Activated B cell treated with CpG ODN at 0.5 μM for 24 hours (primary cell): ENCODE measurements at regions of chr2 and their contacts with region 1.

Region 1: DNA sequence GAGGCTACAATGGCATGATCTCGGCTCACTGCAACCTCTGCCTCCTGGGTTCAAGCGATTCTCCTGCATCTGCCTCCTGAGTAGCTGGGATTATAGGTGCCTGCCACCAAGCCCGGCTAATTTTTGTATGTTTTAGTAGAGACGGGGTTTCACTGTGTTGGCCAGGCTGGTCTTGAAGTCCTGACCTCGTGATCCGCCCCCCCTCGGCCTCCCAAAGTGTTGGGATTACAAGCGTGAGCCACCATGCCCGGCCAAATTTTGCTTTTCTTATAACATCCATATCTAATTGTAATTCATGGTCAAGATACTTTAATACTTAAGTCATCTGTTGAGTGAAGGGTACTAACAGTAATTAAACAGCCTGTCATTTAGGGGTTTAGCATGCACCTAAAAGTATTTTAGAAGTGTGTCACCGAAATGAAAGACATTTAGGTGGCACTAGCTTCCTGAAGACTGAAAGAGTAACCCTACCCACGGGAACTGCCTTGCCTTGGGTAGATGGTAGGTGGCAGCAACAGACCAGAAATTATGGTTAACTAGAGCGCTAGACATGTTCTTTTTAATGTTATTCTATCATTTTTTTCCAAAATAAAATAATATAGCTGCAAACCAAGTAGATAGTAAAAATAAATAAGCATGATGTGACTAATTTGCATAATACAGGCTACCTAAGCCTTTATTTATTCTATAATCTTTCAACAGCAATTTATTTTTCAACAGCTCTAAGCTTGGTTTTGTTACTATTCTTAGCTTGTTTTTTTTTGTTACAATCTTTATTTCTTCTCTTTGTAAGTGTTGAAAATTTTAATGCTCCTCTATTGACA is 8.6 kb upstream of the ACYP2 start:
- DNase-seq: no peak
- ATAC-seq: peak; percentile 35
- H3K4me3 Mint-ChIP-seq: no peak overlapping the region
- H3K27ac Mint-ChIP-seq: peak overlapping the region; percentile 12
- H3K4me1 Mint-ChIP-seq: peaks cover 51% of the 10 kb centered on the region
- H3K27me3 Mint-ChIP-seq: no peaks in the 10 kb centered on the region
- CTCF ChIP-seq: peak; percentile 45

Region 2: GRCh38 chr2:53941749-53942148 is 165.1 kb before region 1 on chr2:
- CTCF ChIA-PET with region 1: interaction called, 5 read pairs
- POLR2A ChIA-PET with region 1: no interaction called
- intact Hi-C with region 1: loop called (anchors 5 kb)
- DNase-seq: no peak
- ATAC-seq: peak; percentile 66
- H3K4me3 Mint-ChIP-seq: no peak overlapping the region
- H3K27ac Mint-ChIP-seq: peak overlapping the region; percentile 59
- H3K4me1 Mint-ChIP-seq: peaks cover 60% of the 10 kb centered on the region
- H3K27me3 Mint-ChIP-seq: no peaks in the 10 kb centered on the region
- CTCF ChIP-seq: no peak

Region 3: GRCh38 chr2:54503192-54503591 is 396.3 kb after region 1 on chr2:
- CTCF ChIA-PET with region 1: interaction called, 30 read pairs
- POLR2A ChIA-PET with region 1: no interaction called
- intact Hi-C with region 1: loop called (anchors 1 kb)
- DNase-seq: no peak
- ATAC-seq: peak; percentile 45
- H3K4me3 Mint-ChIP-seq: no peak overlapping the region
- H3K27ac Mint-ChIP-seq: no peak overlapping the region
- H3K4me1 Mint-ChIP-seq: no peaks in the 10 kb centered on the region
- H3K27me3 Mint-ChIP-seq: no peaks in the 10 kb centered on the region
- CTCF ChIP-seq: no peak

Region 4: DNA sequence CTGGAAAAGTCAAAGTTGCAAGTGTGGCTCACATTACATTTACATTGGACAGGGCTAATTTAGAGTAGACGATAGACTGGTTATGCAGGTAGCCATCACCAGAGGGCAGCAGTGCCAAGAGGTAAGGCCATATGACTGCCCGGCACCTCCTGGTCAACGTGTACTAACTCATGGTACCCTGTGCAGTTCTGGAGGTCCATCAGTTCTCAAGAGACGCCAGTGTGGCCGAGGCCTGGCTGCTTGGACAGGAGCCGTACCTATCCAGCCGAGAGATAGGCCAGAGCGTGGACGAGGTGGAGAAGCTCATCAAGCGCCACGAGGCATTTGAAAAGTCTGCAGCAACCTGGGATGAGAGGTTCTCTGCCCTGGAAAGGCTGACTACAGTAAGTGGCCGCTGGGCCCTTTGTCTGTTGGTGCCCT is 550.8 kb after region 1 on chr2:
- CTCF ChIA-PET with region 1: interaction called, 11 read pairs
- POLR2A ChIA-PET with region 1: no interaction called
- intact Hi-C with region 1: loop called (anchors 1 kb)
- DNase-seq: no peak
- ATAC-seq: peak; percentile 73
- H3K4me3 Mint-ChIP-seq: no peak overlapping the region
- H3K27ac Mint-ChIP-seq: peak overlapping the region; percentile 46
- H3K4me1 Mint-ChIP-seq: no peaks in the 10 kb centered on the region
- H3K27me3 Mint-ChIP-seq: no peaks in the 10 kb centered on the region
- CTCF ChIP-seq: no peak

Region 5: GRCh38 chr2:54755641-54756326 is 648.9 kb after region 1 on chr2:
- CTCF ChIA-PET with region 1: no interaction called
- POLR2A ChIA-PET with region 1: no interaction called
- intact Hi-C with region 1: loop called (anchors 5 kb)
- DNase-seq: no peak
- ATAC-seq: peak; percentile 67
- H3K4me3 Mint-ChIP-seq: peak overlapping the region; percentile 74
- H3K27ac Mint-ChIP-seq: peak overlapping the region; percentile 92
- H3K4me1 Mint-ChIP-seq: peaks cover 50% of the 10 kb centered on the region
- H3K27me3 Mint-ChIP-seq: no peaks in the 10 kb centered on the region
- CTCF ChIP-seq: no peak

Region 6: GRCh38 chr2:55175254-55176025 is 1068.6 kb after region 1 on chr2:
- CTCF ChIA-PET with region 1: interaction called, 10 read pairs
- POLR2A ChIA-PET with region 1: no interaction called
- intact Hi-C with region 1: no loop called
- DNase-seq: no peak
- ATAC-seq: peak; percentile 86
- H3K4me3 Mint-ChIP-seq: peak overlapping the region; percentile 8
- H3K27ac Mint-ChIP-seq: no peak overlapping the region
- H3K4me1 Mint-ChIP-seq: peaks cover 7% of the 10 kb centered on the region
- H3K27me3 Mint-ChIP-seq: no peaks in the 10 kb centered on the region
- CTCF ChIP-seq: no peak

Region 7: DNA sequence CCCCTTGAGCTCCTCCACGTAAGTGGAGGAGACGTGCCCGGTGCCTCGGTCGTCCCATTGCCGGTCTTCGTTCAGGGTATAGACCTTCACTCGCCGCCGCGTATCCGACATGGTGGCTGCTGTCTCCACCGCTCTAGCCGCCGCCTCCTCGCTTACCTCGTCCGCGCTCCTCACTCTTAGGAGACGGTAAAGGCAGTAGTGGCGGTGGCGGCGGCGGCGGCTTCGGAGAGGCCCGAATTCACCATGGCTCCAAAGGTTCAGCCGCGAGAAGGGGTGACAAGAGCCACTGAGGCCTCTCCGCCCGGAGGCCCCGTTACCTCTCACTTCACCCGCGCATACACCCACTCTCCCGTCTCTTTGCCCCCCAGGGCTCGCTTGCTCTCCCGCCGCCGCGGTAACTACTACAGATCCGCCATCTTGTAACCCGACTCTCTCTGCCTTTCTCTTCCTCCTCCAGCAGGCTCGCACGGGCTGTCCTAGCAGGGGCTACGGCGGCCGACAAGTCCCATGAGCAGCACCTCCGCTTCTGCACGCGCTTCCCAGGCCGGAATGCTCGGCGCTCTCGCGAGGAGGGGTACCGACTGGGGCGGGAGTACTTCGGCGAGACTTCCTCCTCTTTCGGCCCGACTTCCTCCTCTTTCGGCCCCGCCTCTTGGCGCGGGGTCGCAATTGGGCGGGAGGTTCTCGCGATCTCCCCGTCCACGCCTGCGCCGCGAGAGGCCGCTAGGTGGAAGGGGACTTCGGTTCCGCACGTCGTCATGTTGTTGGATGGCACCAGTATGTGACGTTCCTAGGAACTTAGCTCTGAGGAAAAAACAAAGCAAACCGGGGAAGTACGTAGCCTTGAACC is 1510.6 kb after region 1 on chr2 and contains the start of gene PPP4R3B:
- CTCF ChIA-PET with region 1: no interaction called
- POLR2A ChIA-PET with region 1: no interaction called
- intact Hi-C with region 1: loop called (anchors 5 kb)
- DNase-seq: peak; percentile 96
- ATAC-seq: peak; percentile 81
- H3K4me3 Mint-ChIP-seq: no peak within 1 kb of the TSS
- H3K27ac Mint-ChIP-seq: no peak within 1 kb of the TSS
- H3K4me1 Mint-ChIP-seq: peaks cover 22% of the 10 kb centered on the region
- H3K27me3 Mint-ChIP-seq: no peaks in the 10 kb centered on the region
- CTCF ChIP-seq: no peak
- total RNA-seq, gene PPP4R3B: 75.6 and 82.4 TPM in 2 replicates